Activated B cell treated with CpG ODN at 0.5 μM for 24 hours (primary cell): ENCODE measurements at regions of chr14 and their contacts with region 1.

Region 1: DNA sequence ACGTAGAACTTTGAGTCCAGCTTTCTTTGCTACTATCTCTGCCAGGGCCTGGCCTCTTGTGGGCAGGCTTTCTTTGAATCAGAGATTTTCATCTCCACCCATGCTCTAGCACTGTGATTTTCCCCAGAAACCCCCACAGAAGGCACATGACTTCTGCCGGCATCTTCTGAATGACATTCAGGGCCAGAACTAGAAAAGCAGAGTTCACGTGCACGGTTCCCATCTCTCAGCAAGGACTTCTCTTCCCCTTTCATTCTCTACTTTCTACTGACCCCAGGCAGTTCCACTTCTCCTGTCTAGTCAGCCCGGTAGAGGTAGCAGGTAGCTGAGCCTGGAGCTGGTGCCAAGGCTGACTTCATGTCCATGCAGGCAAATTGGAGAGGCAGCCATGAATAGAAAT is 26.9 kb downstream of the BATF start:
- DNase-seq: no peak
- ATAC-seq: peak; percentile 80
- H3K4me3 Mint-ChIP-seq: peak overlapping the region; percentile 21
- H3K27ac Mint-ChIP-seq: peak overlapping the region; percentile 85
- H3K4me1 Mint-ChIP-seq: peaks cover 69% of the 10 kb centered on the region
- H3K27me3 Mint-ChIP-seq: no peaks in the 10 kb centered on the region
- CTCF ChIP-seq: no peak

Region 2: GRCh38 chr14:74290415-74290814 is 1258.8 kb before region 1 on chr14:
- CTCF ChIA-PET with region 1: no interaction called
- POLR2A ChIA-PET with region 1: no interaction called
- intact Hi-C with region 1: no loop called
- DNase-seq: no peak
- ATAC-seq: peak; percentile 31
- H3K4me3 Mint-ChIP-seq: no peak overlapping the region
- H3K27ac Mint-ChIP-seq: no peak overlapping the region
- H3K4me1 Mint-ChIP-seq: no peaks in the 10 kb centered on the region
- H3K27me3 Mint-ChIP-seq: no peaks in the 10 kb centered on the region
- CTCF ChIP-seq: no peak

Region 3: GRCh38 chr14:75522224-75522982 is 26.8 kb before region 1 on chr14 and contains the start of gene BATF:
- CTCF ChIA-PET with region 1: interaction called, 4 read pairs
- POLR2A ChIA-PET with region 1: interaction called, 356 read pairs
- intact Hi-C with region 1: no loop called
- DNase-seq: peak; percentile 58
- ATAC-seq: peak; percentile 70
- H3K4me3 Mint-ChIP-seq: peak within 1 kb of the TSS; percentile 100
- H3K27ac Mint-ChIP-seq: peak within 1 kb of the TSS; percentile 98
- H3K4me1 Mint-ChIP-seq: peaks cover 85% of the 10 kb centered on the region
- H3K27me3 Mint-ChIP-seq: no peaks in the 10 kb centered on the region
- CTCF ChIP-seq: no peak
- total RNA-seq, gene BATF: 160 and 171 TPM in 2 replicates